Natural killer cell (primary cell): ENCODE measurements at regions of chr5 and their contacts with region 1.

Region 1: GRCh38 chr5:43484106-43484849 is 613 bp upstream of the TMEM267 start:
- DNase-seq: peak; percentile 80 to 91
- ATAC-seq: peak; percentile 75 to 86 (median 76)
- H3K4me3 ChIP-seq: peak overlapping the region; percentile 95
- H3K4me3 Mint-ChIP-seq: peak overlapping the region; percentile 97
- H3K27ac ChIP-seq: peak overlapping the region; percentile 99
- H3K27ac Mint-ChIP-seq: peak overlapping the region; percentile 97 to 99
- H3K4me1 ChIP-seq: peaks cover 11% of the 10 kb centered on the region
- H3K4me1 Mint-ChIP-seq: peaks cover 34 to 35% of the 10 kb centered on the region in 2 donors
- H3K27me3 ChIP-seq: no peaks in the 10 kb centered on the region
- H3K27me3 Mint-ChIP-seq: no peaks in the 10 kb centered on the region
- CTCF ChIP-seq: peak; percentile 74

Region 2: GRCh38 chr5:42994246-42995151 is 489.8 kb before region 1 on chr5:
- intact Hi-C with region 1: loop called (anchors 10 kb)
- DNase-seq: peak; percentile 82 to 94
- ATAC-seq: peak; percentile 63 to 81 (median 64)
- H3K4me3 ChIP-seq: peak overlapping the region; percentile 69
- H3K4me3 Mint-ChIP-seq: peak overlapping the region; percentile 98
- H3K27ac ChIP-seq: peak overlapping the region; percentile 95
- H3K27ac Mint-ChIP-seq: peak overlapping the region; percentile 95 to 99
- H3K4me1 ChIP-seq: peaks cover 40% of the 10 kb centered on the region
- H3K4me1 Mint-ChIP-seq: peaks cover 44 to 46% of the 10 kb centered on the region in 2 donors
- H3K27me3 ChIP-seq: no peaks in the 10 kb centered on the region
- H3K27me3 Mint-ChIP-seq: no peaks in the 10 kb centered on the region
- CTCF ChIP-seq: peak; percentile 85

Region 3: DNA sequence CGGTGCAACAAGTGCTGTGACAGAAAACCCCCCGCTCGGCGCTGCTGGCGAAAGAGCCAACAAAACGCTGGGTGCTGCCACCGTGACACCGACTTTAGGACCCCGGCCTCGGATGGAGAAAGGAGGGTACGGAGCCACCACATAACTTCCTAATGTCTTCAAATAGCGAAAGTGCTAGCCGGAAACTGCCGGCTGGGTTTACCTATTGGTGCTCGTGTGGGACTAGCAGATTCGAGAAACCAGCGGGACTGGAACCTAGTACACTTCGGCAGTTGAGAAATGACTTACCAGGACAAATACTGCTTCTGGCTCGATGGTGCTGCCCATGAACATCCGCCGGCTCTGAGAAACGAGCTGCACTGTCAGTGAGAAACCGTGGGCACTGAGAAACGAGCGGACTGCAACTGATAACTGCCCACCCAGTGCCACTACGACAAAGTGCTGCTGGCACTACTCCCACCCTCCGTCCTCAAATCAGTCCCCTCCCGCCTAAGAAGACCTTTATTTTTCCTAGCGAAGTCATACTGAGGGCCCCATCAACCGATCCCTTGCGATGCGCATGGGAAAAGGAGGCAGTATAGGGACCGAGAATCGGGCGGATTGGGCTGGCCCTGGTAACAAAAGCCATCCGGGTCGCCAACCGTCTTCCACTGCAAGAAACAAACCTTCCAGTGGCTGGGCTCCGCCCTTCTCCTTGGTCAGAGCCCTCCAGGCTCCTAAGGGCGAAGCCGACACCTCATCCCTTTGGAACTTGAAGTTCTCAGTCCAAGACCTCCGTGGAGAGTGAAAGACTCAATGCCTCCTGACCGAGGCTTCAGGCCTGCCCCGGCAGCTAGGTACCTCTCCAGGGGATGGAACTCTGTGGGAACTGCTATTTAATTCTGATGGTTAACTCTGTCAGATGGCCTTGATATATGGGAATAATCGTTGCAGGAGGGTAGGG is 417.2 kb before region 1 on chr5:
- intact Hi-C with region 1: loop called (anchors 1 kb)
- DNase-seq: peak; percentile 87 to 95
- ATAC-seq: peak; percentile 51 to 74 (median 57)
- H3K4me3 ChIP-seq: peak overlapping the region; percentile 72
- H3K4me3 Mint-ChIP-seq: peak overlapping the region; percentile 100
- H3K27ac ChIP-seq: peak overlapping the region; percentile 96
- H3K27ac Mint-ChIP-seq: peak overlapping the region; percentile 97 to 100
- H3K4me1 ChIP-seq: peaks cover 46% of the 10 kb centered on the region
- H3K4me1 Mint-ChIP-seq: peaks cover 41 to 51% of the 10 kb centered on the region in 2 donors
- H3K27me3 ChIP-seq: no peaks in the 10 kb centered on the region
- H3K27me3 Mint-ChIP-seq: no peaks in the 10 kb centered on the region
- CTCF ChIP-seq: no peak

Region 4: GRCh38 chr5:43120720-43121564 is 363.3 kb before region 1 on chr5 and contains the start of gene ZNF131:
- intact Hi-C with region 1: loop called (anchors 1 kb)
- DNase-seq: peak; percentile 99
- ATAC-seq: peak; percentile 87 to 96 (median 89)
- H3K4me3 ChIP-seq: peak within 1 kb of the TSS; percentile 59
- H3K4me3 Mint-ChIP-seq: peak within 1 kb of the TSS; percentile 87
- H3K27ac ChIP-seq: peak within 1 kb of the TSS; percentile 88
- H3K27ac Mint-ChIP-seq: peak within 1 kb of the TSS; percentile 88 to 99
- H3K4me1 ChIP-seq: peaks cover 13% of the 10 kb centered on the region
- H3K4me1 Mint-ChIP-seq: peaks cover 26 to 29% of the 10 kb centered on the region in 2 donors
- H3K27me3 ChIP-seq: no peaks in the 10 kb centered on the region
- H3K27me3 Mint-ChIP-seq: no peaks in the 10 kb centered on the region
- CTCF ChIP-seq: no peak
- total RNA-seq, gene ZNF131: 69.0 to 84.0 (median 83.5) TPM

Region 5: DNA sequence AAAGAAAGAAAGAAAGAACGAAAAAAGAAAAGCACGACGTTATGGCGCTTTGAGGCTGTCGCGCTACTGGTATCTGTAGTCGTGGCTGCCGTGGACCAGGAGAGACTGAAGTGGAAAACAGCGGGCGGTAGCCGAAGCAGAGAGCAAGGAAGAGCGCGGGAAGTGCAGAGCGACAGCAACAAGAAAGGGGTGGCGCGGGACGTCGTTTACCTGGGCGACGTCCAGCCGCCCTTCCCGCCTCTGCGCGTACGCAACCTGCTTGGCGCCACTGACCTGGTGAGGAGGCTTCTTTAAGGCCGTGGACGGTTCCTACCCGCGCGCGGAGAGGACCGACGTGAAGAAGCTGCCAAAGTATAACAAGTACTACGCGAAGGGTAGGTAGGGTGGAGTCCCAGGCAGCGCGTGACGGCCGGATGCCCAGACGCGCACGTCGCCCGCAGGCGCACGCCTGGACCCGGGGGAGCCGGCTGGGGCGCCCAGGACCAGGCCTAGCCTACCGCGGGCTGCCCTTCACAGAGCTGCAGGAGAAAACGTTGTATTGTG is 87.4 kb before region 1 on chr5:
- intact Hi-C with region 1: loop called (anchors 2 kb)
- DNase-seq: peak; percentile 58 to 77
- ATAC-seq: peak; percentile 95 to 97 (median 96)
- H3K4me3 ChIP-seq: peak overlapping the region; percentile 82
- H3K4me3 Mint-ChIP-seq: peak overlapping the region; percentile 100
- H3K27ac ChIP-seq: peak overlapping the region; percentile 73
- H3K27ac Mint-ChIP-seq: peak overlapping the region; percentile 93 to 97
- H3K4me1 ChIP-seq: peaks cover 9% of the 10 kb centered on the region
- H3K4me1 Mint-ChIP-seq: peaks cover 8 to 15% of the 10 kb centered on the region in 2 donors
- H3K27me3 ChIP-seq: no peaks in the 10 kb centered on the region
- H3K27me3 Mint-ChIP-seq: no peaks in the 10 kb centered on the region
- CTCF ChIP-seq: no peak

Region 6: DNA sequence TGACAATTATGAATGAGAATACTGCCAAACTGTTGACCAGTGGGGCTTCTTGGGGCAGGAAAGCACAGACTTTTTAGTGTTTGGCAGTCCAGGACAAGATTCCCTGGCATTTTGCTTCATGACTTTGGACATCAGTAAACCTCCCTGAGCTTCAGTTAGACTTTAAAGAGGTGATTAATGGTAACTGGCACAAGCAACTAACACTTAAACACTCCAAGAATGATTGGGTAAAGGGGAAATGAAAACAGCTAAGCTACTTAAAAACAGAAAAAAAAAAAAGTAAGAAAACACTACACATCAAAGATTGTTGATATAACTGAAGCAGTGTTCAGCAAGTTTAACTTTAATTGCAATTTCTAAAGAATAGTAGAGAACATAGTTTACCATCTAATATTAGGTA is 59.2 kb after region 1 on chr5:
- intact Hi-C with region 1: no loop called
- DNase-seq: no peak
- ATAC-seq: no peak
- H3K4me3 ChIP-seq: no peak overlapping the region
- H3K4me3 Mint-ChIP-seq: no peak overlapping the region
- H3K27ac ChIP-seq: no peak overlapping the region
- H3K27ac Mint-ChIP-seq: peak overlapping the region; percentile 8 to 43
- H3K4me1 ChIP-seq: no peaks in the 10 kb centered on the region
- H3K4me1 Mint-ChIP-seq: peaks cover 0 to 22% of the 10 kb centered on the region in 2 donors
- H3K27me3 ChIP-seq: no peaks in the 10 kb centered on the region
- H3K27me3 Mint-ChIP-seq: no peaks in the 10 kb centered on the region
- CTCF ChIP-seq: no peak

Region 7: DNA sequence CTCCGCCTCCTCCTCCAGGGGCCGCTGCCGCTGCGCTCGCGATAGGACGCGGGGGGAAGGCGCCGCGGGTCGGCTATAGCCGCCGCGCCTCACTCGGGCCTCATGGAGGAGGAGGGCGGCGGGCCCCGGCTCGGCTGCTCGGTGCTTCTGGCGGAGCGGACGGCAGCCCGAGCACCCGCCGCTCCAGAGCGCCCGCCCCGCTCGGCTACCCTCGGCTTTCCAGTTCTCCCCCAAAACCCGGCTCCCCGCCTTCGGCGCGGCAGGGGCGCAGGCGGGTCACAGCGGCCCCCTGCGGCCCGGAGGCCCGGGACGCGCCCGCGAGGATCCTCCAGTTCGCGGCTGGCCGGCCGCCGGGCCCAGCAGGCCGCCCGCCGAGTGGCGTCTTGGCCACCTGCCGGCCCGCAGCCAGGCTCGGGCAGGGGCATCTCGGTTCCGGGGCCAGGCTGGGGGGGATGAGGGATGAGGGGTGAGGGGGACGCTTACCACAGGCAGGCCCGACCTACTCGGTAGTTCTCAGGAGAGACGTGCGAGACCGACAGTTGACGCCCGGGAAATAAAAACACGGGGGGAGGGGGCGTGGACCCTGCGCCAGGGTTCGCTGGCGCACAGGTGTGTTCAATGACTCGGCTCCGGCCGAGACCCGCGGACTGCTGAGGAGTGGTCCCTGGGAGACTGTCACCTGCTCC is 72.7 kb after region 1 on chr5 and contains the start of gene PAIP1:
- intact Hi-C with region 1: loop called (anchors 1 kb)
- DNase-seq: peak; percentile 82 to 91
- ATAC-seq: peak; percentile 86 to 92 (median 87)
- H3K4me3 ChIP-seq: peak within 1 kb of the TSS; percentile 86
- H3K4me3 Mint-ChIP-seq: peak within 1 kb of the TSS; percentile 92
- H3K27ac ChIP-seq: peak within 1 kb of the TSS; percentile 87
- H3K27ac Mint-ChIP-seq: peak within 1 kb of the TSS; percentile 92 to 93
- H3K4me1 ChIP-seq: peaks cover 13% of the 10 kb centered on the region
- H3K4me1 Mint-ChIP-seq: peaks cover 6 to 13% of the 10 kb centered on the region in 2 donors
- H3K27me3 ChIP-seq: no peaks in the 10 kb centered on the region
- H3K27me3 Mint-ChIP-seq: no peaks in the 10 kb centered on the region
- CTCF ChIP-seq: peak; percentile 77
- total RNA-seq, gene PAIP1: 22.4 to 35.1 (median 29.2) TPM

Region 8: GRCh38 chr5:44808435-44809214 is 1324.3 kb after region 1 on chr5 and contains the start of gene MRPS30:
- intact Hi-C with region 1: loop called (anchors 2 kb)
- DNase-seq: peak; percentile 79 to 98
- ATAC-seq: peak; percentile 93 to 97 (median 95)
- H3K4me3 ChIP-seq: peak within 1 kb of the TSS; percentile 99
- H3K4me3 Mint-ChIP-seq: peak within 1 kb of the TSS; percentile 96
- H3K27ac ChIP-seq: peak within 1 kb of the TSS; percentile 94
- H3K27ac Mint-ChIP-seq: peak within 1 kb of the TSS; percentile 92 to 95
- H3K4me1 ChIP-seq: peaks cover 9% of the 10 kb centered on the region
- H3K4me1 Mint-ChIP-seq: peaks cover 24 to 40% of the 10 kb centered on the region in 2 donors
- H3K27me3 ChIP-seq: no peaks in the 10 kb centered on the region
- H3K27me3 Mint-ChIP-seq: peaks cover 0 to 3% of the 10 kb centered on the region in 2 donors
- CTCF ChIP-seq: no peak
- total RNA-seq, gene MRPS30: 34.1 to 43.8 (median 38.9) TPM